ENCODE measurements at regions of chr14 and their contacts with region 1.

Region 1: DNA sequence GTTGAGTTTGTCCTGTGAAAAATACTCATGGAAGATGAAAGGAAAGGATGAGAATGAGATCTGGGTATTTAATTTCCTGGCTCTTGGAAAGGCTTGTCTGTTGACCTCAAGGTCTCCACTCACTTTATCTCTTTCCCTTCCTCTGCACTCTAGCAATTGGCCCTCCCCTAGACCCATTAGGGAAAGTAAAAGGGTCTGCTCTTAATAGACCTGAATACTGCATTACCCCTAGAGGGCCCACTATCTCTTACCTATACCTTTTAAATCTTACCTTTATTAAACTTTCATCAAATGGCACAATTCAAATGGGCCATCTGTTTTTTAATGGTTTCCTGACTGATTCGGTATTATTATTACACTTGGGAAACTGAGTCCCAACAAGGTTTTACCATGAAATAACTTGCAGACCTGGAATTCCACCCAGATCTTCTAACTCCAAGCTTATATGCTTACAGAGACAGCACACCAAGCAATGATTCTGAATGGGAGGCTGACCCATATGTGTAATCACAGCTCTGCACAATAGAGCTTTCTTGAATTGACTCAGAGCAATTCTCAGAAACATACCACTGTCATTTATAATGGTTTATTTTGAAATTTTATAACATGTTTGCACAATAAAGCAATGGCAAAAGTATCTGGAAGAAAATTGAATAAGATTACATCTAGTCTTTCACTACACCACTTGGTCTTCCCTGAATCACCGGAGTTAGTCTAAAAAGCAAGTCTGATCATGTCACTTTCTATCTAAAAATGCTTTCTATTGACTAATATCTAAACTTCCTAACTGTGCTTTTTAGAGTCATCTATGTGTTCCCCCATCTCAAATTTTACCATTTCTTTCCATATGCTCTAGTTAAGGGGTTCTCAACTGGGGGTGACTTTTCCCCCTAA is 618.5 kb downstream of the NRXN3 start:
- DNase-seq: no peak
- H3K4me3 ChIP-seq: no peak overlapping the region
- H3K27ac ChIP-seq: no peak overlapping the region
- H3K4me1 ChIP-seq: peaks cover 0 to 5% (median 3%) of the 10 kb centered on the region in 4 donors
- H3K27me3 ChIP-seq: no peaks in the 10 kb centered on the region
- CTCF ChIP-seq: no peak
- EP300 ChIP-seq: no peak
- POLR2A ChIP-seq: no peak

Region 2: DNA sequence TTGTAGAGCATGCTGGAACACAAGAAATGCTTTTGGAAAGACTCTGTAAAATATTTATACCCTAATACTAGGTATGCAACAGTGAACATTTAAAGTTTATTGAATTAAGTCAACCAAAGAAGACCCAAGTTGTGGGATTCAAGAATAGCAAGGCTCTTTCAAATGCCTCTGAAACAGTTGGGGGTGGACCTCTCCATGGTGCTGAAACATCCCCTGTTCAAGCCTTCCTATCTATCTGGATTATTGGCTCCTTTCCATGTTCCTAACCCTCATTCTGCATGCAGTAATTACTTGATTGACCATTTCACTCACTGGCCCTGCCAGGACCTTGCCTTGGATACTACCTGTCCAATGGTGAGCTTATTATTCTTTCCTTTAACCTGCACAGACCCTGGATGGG is 268.9 kb before region 1 on chr14:
- in situ Hi-C with region 1: no loop called
- intact Hi-C with region 1: no loop called
- DNase-seq: peak; percentile 8
- H3K4me3 ChIP-seq: no peak overlapping the region
- H3K27ac ChIP-seq: no peak overlapping the region
- H3K4me1 ChIP-seq: no peaks in the 10 kb centered on the region
- H3K27me3 ChIP-seq: no peaks in the 10 kb centered on the region
- CTCF ChIP-seq: no peak
- EP300 ChIP-seq: no peak
- POLR2A ChIP-seq: no peak

Region 3: GRCh38 chr14:78721756-78722480 is 66.8 kb before region 1 on chr14:
- in situ Hi-C with region 1: no loop called
- intact Hi-C with region 1: no loop called
- DNase-seq: no peak
- H3K4me3 ChIP-seq: no peak overlapping the region
- H3K27ac ChIP-seq: peak overlapping the region in 1 of 4 donors; percentile 23
- H3K4me1 ChIP-seq: no peaks in the 10 kb centered on the region
- H3K27me3 ChIP-seq: no peaks in the 10 kb centered on the region
- CTCF ChIP-seq: no peak
- EP300 ChIP-seq: no peak
- POLR2A ChIP-seq: no peak

Region 4: DNA sequence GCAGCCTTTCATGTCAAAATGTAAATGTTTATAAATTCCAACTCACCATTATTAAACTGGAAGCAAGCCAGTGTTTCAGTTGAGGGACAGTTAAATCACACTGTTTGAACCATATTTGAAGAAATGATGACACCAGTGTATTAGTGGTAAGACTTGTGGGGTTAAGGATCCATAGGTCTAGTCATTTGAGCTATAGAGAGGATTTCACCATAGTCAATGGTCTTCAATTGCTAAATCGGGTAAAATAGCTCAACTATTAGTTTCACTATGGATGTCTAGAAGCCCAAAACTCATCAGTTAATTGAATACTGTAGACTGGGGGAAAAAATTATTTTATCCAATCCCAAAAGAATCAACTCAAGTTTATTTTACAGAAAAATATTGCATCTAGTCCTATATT is 40.6 kb after region 1 on chr14:
- in situ Hi-C with region 1: no loop called
- intact Hi-C with region 1: loop called (anchors 1 kb)
- DNase-seq: no peak
- H3K4me3 ChIP-seq: no peak overlapping the region
- H3K27ac ChIP-seq: no peak overlapping the region
- H3K4me1 ChIP-seq: no peaks in the 10 kb centered on the region
- H3K27me3 ChIP-seq: no peaks in the 10 kb centered on the region
- CTCF ChIP-seq: no peak
- EP300 ChIP-seq: no peak
- POLR2A ChIP-seq: no peak

Measured in transverse colon (tissue), 4 donors.